ENCODE measurements at regions of chr7 and their contacts with region 1.

Region 1: GRCh38 chr7:18666107-18666728 is 170.7 kb downstream of the HDAC9 start:
- DNase-seq: peak; percentile 48
- CTCF ChIP-seq: peak; percentile 96

Region 2: GRCh38 chr7:18590744-18591340 is 75.4 kb before region 1 on chr7:
- CTCF ChIA-PET with region 1: interaction called, 10 read pairs
- POLR2A ChIA-PET with region 1: no interaction called
- DNase-seq: no peak
- CTCF ChIP-seq: peak; percentile 29

Region 3: GRCh38 chr7:18638594-18639452 is 27.4 kb before region 1 on chr7:
- CTCF ChIA-PET with region 1: interaction called, 20 read pairs
- POLR2A ChIA-PET with region 1: no interaction called
- DNase-seq: no peak
- CTCF ChIP-seq: no peak

Region 4: GRCh38 chr7:18655912-18656311 is 10.3 kb before region 1 on chr7:
- CTCF ChIA-PET with region 1: interaction called, 26 read pairs
- POLR2A ChIA-PET with region 1: no interaction called
- DNase-seq: no peak
- CTCF ChIP-seq: no peak

Measured in GM10248 (cell line).